ENCODE measurements at regions of chr1 and their contacts with region 1.

Region 1: DNA sequence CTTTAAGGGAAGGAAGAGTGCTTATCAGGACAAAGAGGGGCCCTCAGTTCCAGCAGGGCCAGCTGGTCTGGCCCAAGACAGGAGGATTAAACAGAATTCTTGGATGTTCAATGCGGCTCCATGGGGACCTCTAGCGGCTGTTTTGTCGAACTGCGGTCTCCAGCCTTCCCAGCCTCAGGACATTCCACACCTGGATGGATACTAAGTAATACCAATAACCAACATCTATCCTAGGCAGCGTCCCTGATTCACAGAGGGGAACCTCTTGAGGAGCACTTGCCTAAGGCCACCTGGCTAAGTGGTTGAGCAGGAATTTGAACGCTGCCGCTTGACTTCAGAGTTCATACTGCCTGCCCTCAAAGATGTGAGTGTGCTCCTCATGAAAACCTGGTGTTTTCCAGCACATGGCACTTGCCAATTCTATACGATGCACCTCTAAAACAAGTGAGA is 15.5 kb upstream of the CD247 start:
- ATAC-seq: peak; percentile 79 to 95 (median 86)
- H3K4me3 ChIP-seq: no peak overlapping the region
- H3K27ac ChIP-seq: no peak overlapping the region
- H3K4me1 ChIP-seq: peaks cover 2 to 6% of the 10 kb centered on the region in 2 donors

Region 2: GRCh38 chr1:167273027-167273800 is 260.7 kb before region 1 on chr1:
- in situ Hi-C with region 1: loop called in 3 of 9 experiments (anchors 25 kb)
- ATAC-seq: peak in 6 of 8 experiments; percentile 55 to 89 (median 76)
- H3K4me3 ChIP-seq: no peak overlapping the region
- H3K27ac ChIP-seq: no peak overlapping the region
- H3K4me1 ChIP-seq: peaks cover 8 to 18% of the 10 kb centered on the region in 2 donors

Region 3: DNA sequence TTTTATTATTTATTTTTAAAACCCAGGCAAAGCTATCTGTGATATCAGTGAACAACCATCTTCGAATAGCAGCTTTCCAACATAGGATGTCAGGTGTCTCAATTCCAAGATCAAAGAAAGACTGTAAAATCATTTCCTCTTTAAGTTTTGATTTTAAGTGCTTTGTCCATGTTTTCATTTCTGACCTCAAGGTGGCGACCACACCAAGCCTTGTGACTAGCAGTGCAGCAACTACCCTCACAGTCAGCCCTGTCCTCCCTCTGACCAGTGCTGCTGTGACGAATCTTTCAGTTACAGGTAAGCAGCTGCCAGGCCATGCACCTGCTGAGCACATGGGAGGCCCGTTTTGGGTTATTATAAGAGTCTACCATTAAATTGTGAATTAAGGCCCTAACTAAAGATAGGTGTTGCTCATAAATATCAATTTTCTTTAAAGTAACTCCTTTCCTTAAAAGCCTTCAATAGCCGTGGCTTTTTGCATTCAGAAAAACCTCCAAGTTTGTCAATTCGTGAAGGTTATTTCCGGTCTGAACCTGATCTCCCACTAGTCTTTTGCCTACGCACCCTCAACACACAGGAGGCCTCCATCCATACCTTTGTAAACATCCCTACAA is 132.5 kb before region 1 on chr1:
- in situ Hi-C with region 1: loop called in 1 of 9 experiments (anchors 10 kb)
- ATAC-seq: peak; percentile 75 to 94 (median 86)
- H3K4me3 ChIP-seq: no peak overlapping the region
- H3K27ac ChIP-seq: no peak overlapping the region
- H3K4me1 ChIP-seq: peaks cover 7 to 9% of the 10 kb centered on the region in 2 donors